Dendritic cell treated with granulocyte-macrophage colony-stimulating factor and Interleukin-4, amounts not matched to agents 40 ng/mL and 50 ng/mL, for 4 days (primary cell): ENCODE measurements at regions of chr16 and their contacts with region 1.

Region 1: DNA sequence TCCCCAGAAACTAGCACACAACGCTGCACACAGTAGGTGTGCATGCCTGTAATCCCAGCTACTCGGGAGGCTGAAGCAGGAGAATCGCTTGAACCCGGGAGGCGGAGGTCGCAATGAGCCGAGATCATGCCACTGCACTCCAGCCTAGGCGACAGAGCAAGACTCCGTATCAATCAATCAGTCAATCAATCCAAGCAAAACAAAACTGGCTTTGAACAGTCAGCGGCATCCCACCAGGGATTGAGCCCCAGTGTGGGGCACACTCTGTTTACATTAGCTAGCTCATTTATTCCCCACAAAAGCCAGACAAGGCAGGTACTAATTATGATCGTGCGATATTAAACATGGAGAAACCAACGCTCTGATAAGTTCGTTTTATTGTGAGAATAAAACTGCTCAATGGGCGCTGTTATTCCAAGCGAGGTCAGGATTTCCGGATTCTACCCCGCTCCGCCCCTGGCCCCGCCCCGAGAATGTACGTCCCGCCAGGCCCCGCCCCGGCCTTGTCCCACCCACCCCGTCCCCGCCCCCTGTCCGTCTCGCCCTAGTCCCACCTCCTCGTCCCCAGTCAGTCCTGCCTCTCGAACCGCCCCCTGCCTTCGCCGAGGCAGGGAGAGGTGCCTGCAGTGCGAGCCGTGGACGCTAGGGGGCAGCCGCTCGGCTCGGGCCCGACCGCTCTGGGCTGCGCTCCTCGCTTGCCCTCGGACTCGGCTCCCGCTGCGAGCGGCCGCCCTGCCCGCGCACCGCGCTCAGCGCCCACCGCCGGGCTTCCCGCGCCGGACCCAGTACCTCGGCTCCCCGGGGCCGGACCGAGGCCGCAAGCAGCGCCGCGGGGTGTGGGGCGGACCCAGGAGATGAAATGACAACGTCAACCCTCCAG is at the start of gene VPS4A:
- H3K4me3 Mint-ChIP-seq: peak within 1 kb of the TSS; percentile 86
- H3K27ac Mint-ChIP-seq: peak within 1 kb of the TSS; percentile 82
- H3K4me1 Mint-ChIP-seq: peaks cover 20% of the 10 kb centered on the region
- H3K27me3 Mint-ChIP-seq: no peaks in the 10 kb centered on the region

Region 2: GRCh38 chr16:69132424-69133252 is 178.3 kb before region 1 on chr16 and contains the starts of genes CHTF8 and UTP4:
- intact Hi-C with region 1: loop called (anchors 2 kb)
- H3K4me3 Mint-ChIP-seq: peak within 1 kb of the TSS; percentile 84
- H3K27ac Mint-ChIP-seq: peak within 1 kb of the TSS; percentile 88
- H3K4me1 Mint-ChIP-seq: peaks cover 47% of the 10 kb centered on the region
- H3K27me3 Mint-ChIP-seq: no peaks in the 10 kb centered on the region

Region 3: DNA sequence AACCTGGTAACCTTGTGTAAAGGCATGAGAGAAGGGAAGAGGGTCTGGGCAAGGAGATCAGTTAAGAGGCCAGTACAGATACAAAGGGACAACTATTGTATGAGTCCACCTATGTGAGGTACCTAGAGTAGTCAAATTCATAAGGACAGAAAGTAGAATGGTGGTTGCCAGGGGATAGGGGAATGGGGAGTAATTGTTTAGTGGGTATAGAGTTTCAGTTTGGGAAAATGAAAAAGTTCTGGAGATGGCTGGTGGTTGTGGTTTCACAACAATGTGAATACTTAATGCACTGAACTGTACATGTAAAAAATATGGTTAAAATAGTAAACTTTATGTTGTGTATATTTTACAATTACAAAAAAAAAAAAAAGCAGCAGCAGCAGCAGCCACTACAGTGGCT is 74.6 kb before region 1 on chr16:
- intact Hi-C with region 1: no loop called
- H3K4me3 Mint-ChIP-seq: no peak overlapping the region
- H3K27ac Mint-ChIP-seq: no peak overlapping the region
- H3K4me1 Mint-ChIP-seq: no peaks in the 10 kb centered on the region
- H3K27me3 Mint-ChIP-seq: no peaks in the 10 kb centered on the region

Region 4: DNA sequence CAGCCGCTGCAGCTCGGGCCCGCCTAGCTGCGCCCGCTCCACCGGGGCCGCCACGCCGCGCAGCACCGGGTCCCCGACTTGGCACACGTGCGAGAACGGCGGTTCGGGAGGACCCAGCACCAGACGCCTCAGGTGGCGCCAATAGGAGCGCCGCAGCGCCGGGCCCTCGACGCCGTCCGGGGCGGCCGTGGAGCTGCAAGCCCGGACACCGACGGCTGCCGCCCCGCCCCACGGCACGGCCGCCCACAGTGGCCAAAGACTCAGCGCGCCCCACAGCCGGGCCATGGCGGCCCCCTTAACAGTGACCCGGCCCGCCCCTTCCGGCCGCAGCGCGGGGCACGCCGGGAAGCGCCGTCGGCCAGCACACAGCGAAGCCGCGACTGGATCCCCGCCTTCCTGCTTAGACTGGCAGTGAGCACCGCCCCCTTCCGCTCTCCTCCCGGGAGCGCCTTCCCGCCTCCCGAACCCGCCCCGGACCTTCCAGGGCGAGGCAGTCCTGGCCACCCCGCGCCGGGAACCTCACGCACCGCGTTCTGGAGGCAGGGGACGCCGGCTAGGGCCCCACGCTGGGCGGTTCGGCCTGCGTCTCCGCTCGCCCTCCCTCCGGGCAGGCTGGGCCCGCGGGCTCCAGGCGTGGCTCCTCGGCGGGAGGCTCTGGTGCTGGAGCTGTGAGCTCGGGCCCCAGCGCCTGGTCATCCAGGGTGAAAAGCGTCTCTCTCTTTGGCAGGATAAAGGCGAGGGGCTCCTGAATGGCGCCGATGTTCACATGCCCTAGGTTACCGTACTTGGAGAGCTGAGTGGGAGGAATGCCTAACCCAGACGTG is 19.6 kb after region 1 on chr16 and contains the start of gene PDF:
- intact Hi-C with region 1: no loop called
- H3K4me3 Mint-ChIP-seq: peak within 1 kb of the TSS; percentile 82
- H3K27ac Mint-ChIP-seq: peak within 1 kb of the TSS; percentile 82
- H3K4me1 Mint-ChIP-seq: peaks cover 48% of the 10 kb centered on the region
- H3K27me3 Mint-ChIP-seq: no peaks in the 10 kb centered on the region